Endothelial cell of umbilical vein (primary cell): ENCODE measurements at regions of chr1 and their contacts with region 1.

Region 1: DNA sequence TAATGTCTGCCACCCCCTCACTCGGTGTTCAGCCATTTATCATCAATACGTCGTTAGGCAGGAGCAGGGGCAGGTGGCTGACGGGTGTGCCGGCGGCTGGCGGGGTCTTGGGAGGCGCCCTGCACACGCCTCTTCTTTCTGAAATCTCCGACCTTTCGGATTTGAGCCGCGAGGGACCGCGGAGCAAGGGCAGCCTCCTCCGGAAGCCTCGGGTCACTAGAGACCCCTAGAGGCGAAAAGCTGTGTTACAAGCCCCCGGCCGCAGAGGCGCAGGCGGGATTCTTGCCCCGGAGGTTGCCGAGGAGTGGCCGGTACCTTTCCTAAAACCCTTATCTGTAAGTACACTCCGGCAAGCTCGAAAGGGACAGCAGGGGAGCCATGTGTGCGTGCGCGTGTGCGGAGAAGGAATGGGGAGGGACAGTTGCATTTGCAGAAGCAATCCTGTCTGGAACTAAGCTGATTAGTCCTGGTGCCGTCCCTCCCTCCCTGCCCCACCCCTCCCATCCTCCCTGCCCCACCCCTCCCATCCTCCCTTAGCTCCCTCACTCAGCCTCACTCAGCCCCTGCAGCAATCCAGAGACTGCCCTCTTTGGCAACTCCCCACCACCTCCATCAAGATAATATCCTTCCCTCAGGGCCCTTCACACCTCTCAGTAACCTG is 11.0 kb downstream of the BRINP2 start:
- DNase-seq: peak; percentile 41
- H3K4me3 ChIP-seq: peak overlapping the region in 1 of 3 experiments; percentile 19
- H3K27ac ChIP-seq: no peak overlapping the region
- H3K4me1 ChIP-seq: peaks cover 3% of the 10 kb centered on the region
- H3K27me3 ChIP-seq: peaks cover 3 to 10% of the 10 kb centered on the region in 2 experiments
- CTCF ChIP-seq: peak; percentile 59 to 80
- POLR2A ChIP-seq: no peak

Region 2: DNA sequence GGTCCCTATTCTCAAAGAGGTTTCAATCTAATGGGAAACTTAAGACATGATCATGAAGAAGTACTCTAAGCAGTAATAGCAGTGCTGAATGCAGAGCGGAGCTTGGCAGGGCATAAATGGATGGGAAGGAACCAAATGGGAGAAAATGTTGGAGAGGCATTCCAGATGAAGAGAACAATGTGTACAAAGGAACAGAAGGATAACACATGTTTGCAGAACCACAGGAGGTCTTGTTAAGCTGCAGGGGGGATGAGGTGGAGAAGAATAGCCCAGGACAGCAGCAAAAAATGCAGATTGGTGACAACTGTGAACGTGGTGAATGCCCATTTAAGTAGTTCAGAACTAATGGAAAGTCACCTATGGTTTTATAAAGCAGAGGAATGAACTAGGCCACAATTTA is 116.3 kb before region 1 on chr1:
- CTCF ChIA-PET with region 1: no interaction called
- POLR2A ChIA-PET with region 1: no interaction called
- dilution Hi-C with region 1: no loop called
- intact Hi-C with region 1: no loop called
- DNase-seq: no peak
- H3K4me3 ChIP-seq: no peak overlapping the region
- H3K27ac ChIP-seq: no peak overlapping the region
- H3K4me1 ChIP-seq: no peaks in the 10 kb centered on the region
- H3K27me3 ChIP-seq: no peaks in the 10 kb centered on the region
- CTCF ChIP-seq: no peak
- POLR2A ChIP-seq: no peak

Region 3: GRCh38 chr1:177164380-177165068 is 17.2 kb before region 1 on chr1 and contains the start of gene ASTN1:
- CTCF ChIA-PET with region 1: interaction called, 11 read pairs
- POLR2A ChIA-PET with region 1: no interaction called
- dilution Hi-C with region 1: no loop called
- intact Hi-C with region 1: no loop called
- DNase-seq: no peak
- H3K4me3 ChIP-seq: no peak within 1 kb of the TSS
- H3K27ac ChIP-seq: no peak within 1 kb of the TSS
- H3K4me1 ChIP-seq: no peaks in the 10 kb centered on the region
- H3K27me3 ChIP-seq: peaks cover 4 to 23% of the 10 kb centered on the region in 2 experiments
- CTCF ChIP-seq: no peak
- POLR2A ChIP-seq: no peak
- total RNA-seq, gene ASTN1: not detected in 2 replicates

Region 4: DNA sequence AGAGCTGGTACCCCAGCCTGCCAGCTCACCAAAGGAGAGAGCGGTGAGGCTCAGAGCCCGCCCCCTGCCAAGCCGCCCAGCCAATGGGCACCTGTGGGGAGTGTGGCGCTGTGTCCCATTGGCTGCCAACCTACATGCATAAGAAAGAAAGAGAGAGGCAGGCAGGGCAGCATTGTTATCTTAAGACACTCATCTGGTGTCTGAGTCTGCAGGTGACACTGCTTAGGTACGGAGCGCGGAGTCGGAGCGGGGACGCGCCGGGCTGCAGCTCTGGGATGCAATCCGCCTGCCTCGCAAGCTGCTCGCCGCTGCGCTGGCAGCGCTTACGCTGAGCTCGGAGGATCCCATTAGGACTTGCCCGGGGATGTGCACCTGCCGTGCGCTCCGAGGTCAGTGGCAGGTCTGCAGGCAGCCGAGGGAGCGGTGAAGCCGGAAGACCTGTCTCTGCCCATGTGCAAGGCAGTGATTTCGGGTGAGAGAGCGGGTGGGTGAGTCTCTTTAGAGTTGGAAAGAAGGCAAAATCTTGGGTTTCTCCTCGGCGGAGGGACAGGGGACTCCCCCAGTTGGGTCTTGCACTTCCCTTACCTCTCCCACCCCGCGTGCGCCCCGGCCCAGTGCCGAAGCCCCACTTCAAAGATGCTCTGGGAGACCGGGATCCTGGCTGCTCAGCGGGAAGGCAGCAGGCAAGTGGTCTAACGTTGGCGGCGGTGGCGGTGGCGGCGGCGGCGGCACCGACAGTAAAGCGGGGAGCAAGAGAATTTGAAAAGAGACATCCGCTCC is 10.8 kb before region 1 on chr1 and contains the start of gene BRINP2:
- CTCF ChIA-PET with region 1: interaction called, 12 read pairs
- POLR2A ChIA-PET with region 1: no interaction called
- dilution Hi-C with region 1: no loop called
- intact Hi-C with region 1: no loop called
- DNase-seq: peak; percentile 47
- H3K4me3 ChIP-seq: peak within 1 kb of the TSS in 1 of 3 experiments; percentile 13
- H3K27ac ChIP-seq: no peak within 1 kb of the TSS
- H3K4me1 ChIP-seq: no peaks in the 10 kb centered on the region
- H3K27me3 ChIP-seq: peaks cover 13 to 25% of the 10 kb centered on the region in 2 experiments
- CTCF ChIP-seq: no peak
- POLR2A ChIP-seq: no peak
- total RNA-seq, gene BRINP2: not detected in 2 replicates

Region 5: DNA sequence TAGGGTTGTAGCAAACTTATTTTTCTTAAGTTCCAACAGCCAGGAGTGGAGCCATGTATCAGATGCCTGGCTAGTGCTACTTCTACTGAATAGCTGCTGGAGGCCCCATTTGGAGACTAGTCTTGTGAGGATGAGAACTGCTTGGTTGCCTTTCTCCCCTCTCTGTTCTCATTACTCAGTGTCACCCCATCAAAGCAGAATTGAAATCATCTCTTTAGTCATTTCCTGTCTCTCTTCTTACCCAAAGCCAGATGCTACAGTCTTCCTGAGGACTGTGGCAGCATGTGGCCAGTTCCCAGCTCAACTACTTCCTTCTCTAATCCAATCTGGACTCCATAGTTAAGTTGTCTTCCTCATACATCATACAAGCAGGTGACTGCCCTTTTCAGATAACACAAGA is 186.5 kb after region 1 on chr1:
- CTCF ChIA-PET with region 1: no interaction called
- POLR2A ChIA-PET with region 1: no interaction called
- dilution Hi-C with region 1: no loop called
- intact Hi-C with region 1: no loop called
- DNase-seq: no peak
- H3K4me3 ChIP-seq: no peak overlapping the region
- H3K27ac ChIP-seq: no peak overlapping the region
- H3K4me1 ChIP-seq: no peaks in the 10 kb centered on the region
- H3K27me3 ChIP-seq: no peaks in the 10 kb centered on the region
- CTCF ChIP-seq: no peak
- POLR2A ChIP-seq: no peak

Region 6: DNA sequence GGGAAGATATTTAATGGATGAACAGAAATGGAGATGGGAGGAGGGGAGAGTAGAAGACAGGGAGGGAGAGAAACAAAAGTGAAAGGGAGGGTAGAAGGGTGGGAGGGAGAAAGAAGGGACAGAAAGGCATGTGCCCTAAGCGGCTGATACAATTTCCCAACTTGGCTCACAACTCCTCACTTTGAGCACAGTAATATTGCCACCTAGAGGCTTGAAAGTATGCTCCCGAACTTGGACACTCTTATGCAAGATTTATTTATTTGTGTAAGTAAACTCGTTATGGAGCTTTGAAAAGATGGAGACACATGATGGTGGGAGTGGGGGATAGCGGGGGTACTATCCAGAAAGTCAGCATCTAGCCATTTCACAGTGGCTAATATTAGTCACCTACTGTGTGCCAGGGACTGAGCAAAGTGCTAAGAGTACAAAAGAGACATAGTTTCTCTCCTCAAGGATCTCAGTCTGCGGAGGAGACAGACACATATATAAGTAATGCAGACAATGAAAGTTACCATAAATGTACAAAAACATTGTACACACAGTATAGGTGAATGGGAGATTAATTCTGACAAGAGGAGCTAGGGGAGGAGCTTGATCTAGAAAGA is 598.4 kb after region 1 on chr1:
- CTCF ChIA-PET with region 1: no interaction called
- POLR2A ChIA-PET with region 1: no interaction called
- dilution Hi-C with region 1: no loop called
- intact Hi-C with region 1: loop called (anchors 10 kb)
- DNase-seq: peak; percentile 45
- H3K4me3 ChIP-seq: no peak overlapping the region
- H3K27ac ChIP-seq: no peak overlapping the region
- H3K4me1 ChIP-seq: peaks cover 4% of the 10 kb centered on the region
- H3K27me3 ChIP-seq: no peaks in the 10 kb centered on the region
- CTCF ChIP-seq: peak in 1 of 2 donors; percentile 19
- POLR2A ChIP-seq: no peak